ENCODE measurements at regions of chr1 and their contacts with region 1.

Region 1: GRCh38 chr1:245045087-245045881 is 109.5 kb upstream of the KIF26B start:
- DNase-seq: no peak
- H3K4me3 ChIP-seq: peak overlapping the region in 1 of 2 donors; percentile 35
- H3K27ac ChIP-seq: no peak overlapping the region
- H3K4me1 ChIP-seq: no peaks in the 10 kb centered on the region
- H3K27me3 ChIP-seq: no peaks in the 10 kb centered on the region
- CTCF ChIP-seq: no peak

Region 2: GRCh38 chr1:244605835-244606370 is 439.4 kb before region 1 on chr1:
- intact Hi-C with region 1: loop called (anchors 2 kb)
- DNase-seq: no peak
- H3K4me3 ChIP-seq: no peak overlapping the region
- H3K27ac ChIP-seq: no peak overlapping the region
- H3K4me1 ChIP-seq: no peaks in the 10 kb centered on the region
- H3K27me3 ChIP-seq: no peaks in the 10 kb centered on the region
- CTCF ChIP-seq: no peak

Region 3: DNA sequence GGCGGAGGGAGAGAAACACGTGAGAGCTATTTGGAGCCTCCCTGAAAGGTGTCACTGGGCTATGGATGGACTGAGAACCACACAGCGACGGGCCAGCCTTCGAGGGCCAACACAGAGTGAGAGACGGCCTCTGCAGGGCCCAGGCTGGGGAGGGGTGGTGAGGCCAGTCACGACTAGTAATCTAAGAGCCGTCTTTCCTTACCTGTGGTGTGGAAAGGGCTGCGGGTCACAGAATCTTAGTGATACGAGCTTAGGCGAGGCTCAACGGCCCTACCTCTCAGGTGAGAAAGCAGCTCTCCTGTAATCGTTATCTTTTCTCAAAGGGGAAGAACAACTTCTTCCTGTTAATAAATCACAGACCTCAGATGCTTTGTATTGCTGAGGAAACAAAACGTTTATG is 243.2 kb before region 1 on chr1:
- intact Hi-C with region 1: loop called (anchors 2 kb)
- DNase-seq: peak in 1 of 2 donors; percentile 28
- H3K4me3 ChIP-seq: no peak overlapping the region
- H3K27ac ChIP-seq: no peak overlapping the region
- H3K4me1 ChIP-seq: no peaks in the 10 kb centered on the region
- H3K27me3 ChIP-seq: no peaks in the 10 kb centered on the region
- CTCF ChIP-seq: no peak

Region 4: GRCh38 chr1:244835276-244836134 is 209.8 kb before region 1 on chr1 and contains the start of gene COX20:
- intact Hi-C with region 1: loop called (anchors 10 kb)
- DNase-seq: peak; percentile 50 to 93
- H3K4me3 ChIP-seq: peak within 1 kb of the TSS; percentile 67 to 76
- H3K27ac ChIP-seq: peak within 1 kb of the TSS; percentile 98 to 99
- H3K4me1 ChIP-seq: peaks cover 0 to 16% of the 10 kb centered on the region in 2 donors
- H3K27me3 ChIP-seq: no peaks in the 10 kb centered on the region
- CTCF ChIP-seq: no peak
- total RNA-seq, gene COX20: 8.2 TPM

Region 5: DNA sequence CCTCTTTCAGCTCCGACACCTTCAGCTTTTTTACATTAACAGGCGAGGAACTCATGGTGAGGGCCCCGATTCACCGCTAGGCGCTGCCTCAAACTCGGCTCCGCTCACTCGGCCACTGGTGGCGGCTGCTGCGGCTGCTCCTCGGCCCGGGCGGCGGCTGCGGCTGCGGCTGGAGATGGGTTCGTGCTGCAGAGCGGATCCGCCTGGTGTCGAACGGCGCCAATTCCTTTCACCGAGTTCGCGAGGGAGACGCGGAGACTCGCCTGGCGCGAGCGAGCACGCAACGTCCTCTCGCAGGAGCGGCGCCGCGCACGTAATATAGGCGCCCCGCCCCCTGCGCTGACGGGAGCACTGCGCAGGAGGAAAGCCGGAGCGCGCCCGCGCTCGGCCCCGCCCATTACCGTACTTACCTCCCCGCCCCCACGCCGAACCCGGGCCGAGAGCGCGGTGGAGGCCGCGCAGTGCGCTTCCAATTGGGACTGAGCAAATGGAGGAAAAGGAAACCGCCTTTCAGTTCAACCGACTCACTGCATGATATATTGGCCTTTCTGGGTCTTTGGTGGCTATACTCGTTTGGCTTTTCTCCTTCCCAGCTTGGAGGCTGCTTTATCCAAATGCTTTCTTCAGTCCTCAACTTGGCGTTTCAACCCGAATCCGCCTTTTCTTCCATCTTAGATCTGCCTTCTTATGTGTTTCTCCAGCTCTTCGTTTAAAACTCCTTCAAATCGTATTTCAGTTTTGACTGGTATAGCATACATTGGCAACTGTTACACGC is 180.8 kb before region 1 on chr1 and contains the start of gene HNRNPU:
- intact Hi-C with region 1: loop called (anchors 2 kb)
- DNase-seq: peak; percentile 86 to 99
- H3K4me3 ChIP-seq: peak within 1 kb of the TSS; percentile 90 to 100
- H3K27ac ChIP-seq: peak within 1 kb of the TSS; percentile 99 to 100
- H3K4me1 ChIP-seq: peaks cover 11 to 33% of the 10 kb centered on the region in 2 donors
- H3K27me3 ChIP-seq: no peaks in the 10 kb centered on the region
- CTCF ChIP-seq: peak; percentile 18 to 44 (median 41)
- total RNA-seq, gene HNRNPU: 128 TPM